Dendritic cell treated with granulocyte-macrophage colony-stimulating factor and Interleukin-4, amounts not matched to agents 40 ng/mL and 50 ng/mL, for 4 days (primary cell): ENCODE measurements at regions of chr12 and their contacts with region 1.

Region 1: DNA sequence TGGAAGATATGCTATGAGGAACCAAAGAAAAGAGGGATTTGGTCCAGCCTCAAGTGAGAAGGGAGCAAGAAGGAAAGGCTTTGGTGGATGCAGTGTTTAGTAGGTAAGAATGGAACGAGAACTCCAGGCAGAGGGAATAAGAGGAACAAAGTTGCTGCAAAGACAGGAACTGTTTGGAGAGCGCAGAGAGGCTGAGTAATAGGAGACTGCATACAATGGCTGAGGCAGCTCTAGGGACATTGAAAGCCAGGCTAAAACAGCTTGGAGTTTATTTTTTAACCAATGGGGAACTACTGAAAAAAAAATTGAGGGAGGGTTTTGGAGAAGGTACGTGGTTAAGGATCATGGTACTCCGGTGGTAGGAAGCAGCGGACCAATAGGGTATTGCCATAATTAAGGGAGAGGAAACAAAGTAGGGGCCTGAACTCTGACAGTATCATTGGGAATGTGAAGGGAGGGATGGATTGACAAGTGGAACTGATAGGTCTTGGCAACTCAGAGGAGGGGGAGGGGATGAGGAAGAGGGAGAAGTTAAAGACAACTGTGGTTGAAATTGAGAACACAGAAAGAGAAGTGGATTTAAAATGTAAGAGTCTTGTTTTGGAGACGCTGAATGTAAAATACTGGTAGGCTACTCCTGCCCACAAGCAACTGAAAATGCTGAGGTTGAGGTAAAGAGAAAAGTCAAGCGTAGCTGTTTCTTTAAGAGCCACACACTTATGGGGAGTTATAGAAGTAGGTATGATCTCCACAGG is 4.8 kb downstream of the ASCL4 start:
- H3K4me3 Mint-ChIP-seq: peak overlapping the region; percentile 71
- H3K27ac Mint-ChIP-seq: peak overlapping the region; percentile 93
- H3K4me1 Mint-ChIP-seq: peaks cover 74% of the 10 kb centered on the region
- H3K27me3 Mint-ChIP-seq: peaks cover 24% of the 10 kb centered on the region

Region 2: DNA sequence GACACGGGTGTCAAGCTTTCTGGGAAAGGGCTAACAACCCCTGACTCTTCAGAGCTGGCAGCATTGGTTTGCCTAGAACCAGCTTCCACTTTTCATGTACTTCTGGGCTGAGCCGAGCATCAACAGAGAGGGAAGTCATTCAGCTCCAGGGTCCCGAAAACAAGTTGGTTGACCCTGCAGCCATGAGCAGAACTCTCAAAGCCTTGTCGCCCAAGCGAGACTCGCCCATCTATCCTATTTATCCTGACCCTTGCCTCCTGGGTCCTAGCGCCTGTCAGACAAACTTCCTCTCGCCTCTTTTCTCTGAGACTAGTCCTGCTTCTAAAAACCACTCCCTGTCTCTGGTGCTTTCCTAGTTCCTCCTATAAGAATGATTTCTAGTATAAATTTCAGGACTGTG is 43.1 kb after region 1 on chr12:
- intact Hi-C with region 1: no loop called
- H3K4me3 Mint-ChIP-seq: peak overlapping the region; percentile 37
- H3K27ac Mint-ChIP-seq: no peak overlapping the region
- H3K4me1 Mint-ChIP-seq: peaks cover 5% of the 10 kb centered on the region
- H3K27me3 Mint-ChIP-seq: peaks cover 19% of the 10 kb centered on the region

Region 3: GRCh38 chr12:107843351-107844311 is 64.4 kb after region 1 on chr12:
- intact Hi-C with region 1: loop called (anchors 10 kb)
- H3K4me3 Mint-ChIP-seq: peak overlapping the region; percentile 58
- H3K27ac Mint-ChIP-seq: no peak overlapping the region
- H3K4me1 Mint-ChIP-seq: peaks cover 33% of the 10 kb centered on the region
- H3K27me3 Mint-ChIP-seq: peaks cover 69% of the 10 kb centered on the region